ENCODE measurements at regions of chr6 and their contacts with region 1.

Region 1: GRCh38 chr6:41602864-41603608 is 35.2 kb upstream of the MDFI start:
- H3K4me3 ChIP-seq: peak overlapping the region; percentile 12
- H3K27ac ChIP-seq: no peak overlapping the region
- H3K4me1 ChIP-seq: no peaks in the 10 kb centered on the region
- CTCF ChIP-seq: peak; percentile 87

Region 2: GRCh38 chr6:41463062-41463930 is 139.7 kb before region 1 on chr6:
- CTCF ChIA-PET with region 1: interaction called, 15 read pairs
- POLR2A ChIA-PET with region 1: interaction called, 3 read pairs
- H3K4me3 ChIP-seq: no peak overlapping the region
- H3K27ac ChIP-seq: no peak overlapping the region
- H3K4me1 ChIP-seq: no peaks in the 10 kb centered on the region
- CTCF ChIP-seq: peak; percentile 19; the same call in 1 of the 2 replicates

Region 3: DNA sequence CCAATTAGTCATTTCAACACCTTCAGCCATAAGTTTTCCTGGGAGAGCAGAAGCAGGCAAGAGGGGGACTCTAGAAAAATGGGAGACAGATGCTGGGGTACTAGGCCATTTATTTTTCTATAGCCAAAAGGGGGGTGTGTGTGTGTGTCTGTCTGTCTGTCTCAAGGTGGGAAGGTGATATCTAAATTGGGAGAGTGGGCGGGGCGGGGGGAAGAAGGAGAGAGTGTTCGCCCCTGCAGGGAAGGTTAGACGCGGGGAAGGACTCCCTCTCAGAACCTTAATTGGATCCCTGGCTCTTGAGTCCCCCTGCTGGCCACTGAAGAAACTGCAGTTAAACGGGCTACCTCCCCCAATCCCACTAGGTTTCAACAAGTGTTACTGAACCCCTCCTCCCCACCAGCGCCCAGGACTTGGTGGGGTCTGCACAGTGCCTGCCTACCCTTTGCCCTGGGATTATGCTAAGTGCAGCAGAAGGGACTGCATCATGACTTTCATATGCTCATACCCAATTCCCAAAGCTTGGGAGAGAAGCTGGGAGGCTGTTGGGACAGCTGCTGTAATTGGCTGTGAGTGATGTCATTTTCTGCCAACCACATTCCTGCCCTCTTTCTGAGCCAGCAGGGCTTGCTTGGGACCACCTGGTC is 11.1 kb before region 1 on chr6:
- CTCF ChIA-PET with region 1: interaction called, 26 read pairs
- POLR2A ChIA-PET with region 1: interaction called, 3 read pairs
- H3K4me3 ChIP-seq: no peak overlapping the region
- H3K27ac ChIP-seq: no peak overlapping the region
- H3K4me1 ChIP-seq: no peaks in the 10 kb centered on the region; the same call in 1 of the 2 replicates
- CTCF ChIP-seq: peak; percentile 83

Region 4: DNA sequence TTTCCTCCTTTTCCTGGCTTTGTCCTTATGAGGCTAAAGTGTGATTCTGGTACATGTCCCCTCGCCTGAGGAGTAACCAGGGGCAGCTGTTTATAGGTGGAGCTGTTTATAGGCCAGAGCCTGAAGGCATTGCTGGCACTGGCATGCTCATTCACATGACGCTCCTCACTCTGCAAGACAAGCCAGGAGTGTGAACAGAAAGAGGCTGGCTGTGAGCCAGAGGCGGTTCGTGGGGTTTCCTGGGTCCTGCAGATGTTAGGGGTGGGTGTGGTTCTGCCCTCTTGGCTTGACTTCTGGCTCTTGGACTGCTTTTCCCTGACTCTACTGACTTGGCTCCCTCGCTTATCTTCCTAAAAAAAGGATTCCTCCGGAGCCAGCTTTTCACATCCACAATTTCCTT is 22.4 kb after region 1 on chr6:
- CTCF ChIA-PET with region 1: interaction called, 33 read pairs
- POLR2A ChIA-PET with region 1: no interaction called
- H3K4me3 ChIP-seq: no peak overlapping the region
- H3K27ac ChIP-seq: no peak overlapping the region
- H3K4me1 ChIP-seq: no peaks in the 10 kb centered on the region; the same call in 1 of the 2 replicates
- CTCF ChIP-seq: no peak

Region 5: GRCh38 chr6:41659935-41660505 is 57.0 kb after region 1 on chr6:
- CTCF ChIA-PET with region 1: interaction called, 16 read pairs
- POLR2A ChIA-PET with region 1: no interaction called
- H3K4me3 ChIP-seq: no peak overlapping the region
- H3K27ac ChIP-seq: no peak overlapping the region
- H3K4me1 ChIP-seq: 0 out of 2 replicates have a peak, but pooled peaks cover 3% of the 10 kb centered on the region
- CTCF ChIP-seq: no peak

Region 6: DNA sequence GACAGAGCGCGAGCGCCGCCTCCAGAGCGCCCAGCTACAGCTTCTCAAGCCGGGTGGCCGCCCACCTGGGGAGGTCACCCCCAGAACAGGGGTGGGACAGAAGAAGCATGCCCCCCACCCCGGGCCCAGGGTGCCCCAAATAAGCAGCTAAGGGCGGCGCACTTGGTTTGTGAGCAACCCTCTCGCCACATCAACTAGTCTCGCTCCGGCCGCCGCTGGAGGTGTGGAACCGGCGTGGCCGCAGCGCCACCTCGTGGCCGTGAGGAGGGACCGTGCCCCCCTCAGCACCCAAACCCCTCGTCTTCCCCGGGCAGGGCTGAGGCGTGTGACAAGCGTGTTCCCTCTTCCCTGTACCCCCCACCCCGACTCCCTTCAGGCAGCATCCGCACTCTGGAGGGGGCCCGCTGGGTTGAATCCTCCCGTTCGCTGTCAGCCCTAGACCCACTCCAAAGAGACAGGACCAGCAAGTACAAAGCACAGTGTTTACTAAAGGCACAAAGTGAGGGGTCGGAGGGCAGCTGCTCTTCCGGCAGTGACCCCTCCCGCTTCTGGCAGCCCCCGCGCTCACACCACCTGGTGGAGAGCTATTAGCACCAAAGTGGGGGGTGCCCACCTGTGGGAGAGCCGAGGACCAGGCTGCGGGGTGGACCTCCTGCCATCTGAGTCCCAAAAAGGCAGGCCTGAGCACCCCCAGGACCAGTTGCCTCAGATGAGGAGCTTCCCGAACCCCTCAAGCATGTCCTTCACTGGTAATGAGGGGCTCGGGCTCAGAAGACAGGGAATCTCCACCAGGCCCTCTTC is 80.7 kb after region 1 on chr6:
- CTCF ChIA-PET with region 1: interaction called, 195 read pairs
- POLR2A ChIA-PET with region 1: interaction called, 29 read pairs
- H3K4me3 ChIP-seq: no peak overlapping the region
- H3K27ac ChIP-seq: no peak overlapping the region
- H3K4me1 ChIP-seq: no peaks in the 10 kb centered on the region
- CTCF ChIP-seq: peak; percentile 94

Measured in HEK293 (cell line).